H1 (cell line): ENCODE measurements at regions of chr14 and their contacts with region 1.

Region 1: GRCh38 chr14:76473481-76474263 is 97.7 kb downstream of the ESRRB start:
- DNase-seq: peak in 1 of 2 experiments; percentile 56
- H3K4me3 ChIP-seq: no peak overlapping the region
- H3K27ac ChIP-seq: no peak overlapping the region
- H3K4me1 ChIP-seq: no peaks in the 10 kb centered on the region; a peak in 1 of 7 replicates
- H3K27me3 ChIP-seq: no peaks in the 10 kb centered on the region
- CTCF ChIP-seq: peak; percentile 51 to 57 (median 57)
- EP300 ChIP-seq: no peak
- POLR2A ChIP-seq: no peak
- RAD21 ChIP-seq: peak; percentile 40 to 57

Region 2: GRCh38 chr14:76486251-76486743 is 12.6 kb after region 1 on chr14:
- CTCF ChIA-PET with region 1: interaction called, 44 read pairs
- POLR2A ChIA-PET with region 1: interaction called, 3 read pairs
- DNase-seq: no peak
- H3K4me3 ChIP-seq: no peak overlapping the region
- H3K27ac ChIP-seq: no peak overlapping the region
- H3K4me1 ChIP-seq: peaks cover 0 to 4% (median 3%) of the 10 kb centered on the region in 4 experiments; a peak in 3 of 7 replicates
- H3K27me3 ChIP-seq: no peaks in the 10 kb centered on the region
- CTCF ChIP-seq: no peak
- EP300 ChIP-seq: no peak
- POLR2A ChIP-seq: no peak
- RAD21 ChIP-seq: no peak